ENCODE measurements at regions of chr12 and their contacts with region 1.

Region 1: DNA sequence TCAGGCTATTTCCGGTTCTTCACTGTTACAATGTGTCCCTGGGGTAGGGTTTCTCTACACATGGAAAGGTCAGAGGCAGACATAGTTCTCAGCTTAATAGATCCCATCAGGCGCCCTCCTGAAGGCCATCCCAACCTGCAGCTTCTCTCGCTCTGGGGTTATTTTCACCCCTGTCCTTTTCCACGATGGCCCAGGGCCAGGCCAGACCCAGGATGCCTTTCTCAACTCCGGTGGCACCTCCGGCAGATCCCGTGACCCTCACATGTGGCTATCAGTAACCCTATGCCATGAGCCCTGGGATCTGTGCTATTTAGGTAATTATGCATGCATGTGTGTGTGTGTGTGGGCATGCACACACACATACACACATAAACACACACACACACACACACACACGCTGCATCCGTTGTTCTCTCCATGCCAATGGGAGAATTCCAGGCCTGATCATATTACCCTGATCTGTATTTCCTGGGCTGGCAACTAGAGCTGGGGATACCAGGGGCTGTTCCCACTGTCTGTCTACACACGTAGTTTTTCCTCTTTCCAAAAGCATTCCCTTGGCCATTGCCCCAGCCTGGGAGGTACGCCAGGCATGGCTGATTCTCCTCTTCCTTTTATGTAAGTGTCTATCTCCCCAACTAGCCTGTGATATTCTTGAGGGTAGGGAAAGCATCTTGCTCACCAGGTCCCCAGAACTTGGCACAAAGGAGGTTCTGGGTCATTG is 51.2 kb upstream of the NOS1 start:
- DNase-seq: peak; percentile 85 to 98
- ATAC-seq: peak; percentile 83 to 85
- H3K4me3 ChIP-seq: peak overlapping the region in 1 of 4 donors; percentile 23
- H3K27ac ChIP-seq: peak overlapping the region; percentile 79 to 89 (median 84)
- H3K4me1 ChIP-seq: peaks cover 48 to 57% of the 10 kb centered on the region in 2 donors
- H3K27me3 ChIP-seq: no peaks in the 10 kb centered on the region
- CTCF ChIP-seq: peak in 1 of 5 experiments; percentile 22
- POLR2A ChIP-seq: no peak

Region 2: GRCh38 chr12:117533704-117534103 is 121.1 kb after region 1 on chr12:
- in situ Hi-C with region 1: no loop called
- intact Hi-C with region 1: loop called (anchors 1 kb)
- DNase-seq: peak; percentile 94 to 97
- ATAC-seq: peak; percentile 92 to 96
- H3K4me3 ChIP-seq: no peak overlapping the region
- H3K27ac ChIP-seq: peak overlapping the region; percentile 89 to 93 (median 92)
- H3K4me1 ChIP-seq: peaks cover 22 to 26% of the 10 kb centered on the region in 2 donors
- H3K27me3 ChIP-seq: no peaks in the 10 kb centered on the region
- CTCF ChIP-seq: no peak
- POLR2A ChIP-seq: peak; percentile 32 to 42

Region 3: GRCh38 chr12:118135788-118136558 is 723.3 kb after region 1 on chr12 and contains the start of gene PEBP1:
- in situ Hi-C with region 1: no loop called
- intact Hi-C with region 1: no loop called
- DNase-seq: peak; percentile 94 to 95
- ATAC-seq: peak; percentile 81 to 91
- H3K4me3 ChIP-seq: peak within 1 kb of the TSS; percentile 75 to 94 (median 92)
- H3K27ac ChIP-seq: peak within 1 kb of the TSS; percentile 91 to 97 (median 96)
- H3K4me1 ChIP-seq: peaks cover 14 to 37% of the 10 kb centered on the region in 2 donors
- H3K27me3 ChIP-seq: no peaks in the 10 kb centered on the region
- CTCF ChIP-seq: peak in 1 of 5 experiments; percentile 27
- POLR2A ChIP-seq: peak; percentile 92 to 93
- total RNA-seq, gene PEBP1: 306 to 442 (median 330) TPM